ENCODE measurements at regions of chr15 and their contacts with region 1.

Region 1: GRCh38 chr15:101127506-101128076 is 124.3 kb downstream of the CHSY1 start:
- DNase-seq: peak; percentile 77
- ATAC-seq: peak; percentile 73
- H3K4me3 Mint-ChIP-seq: peak overlapping the region; percentile 69
- H3K27ac Mint-ChIP-seq: peak overlapping the region; percentile 98
- H3K4me1 Mint-ChIP-seq: peaks cover 72% of the 10 kb centered on the region
- H3K27me3 Mint-ChIP-seq: no peaks in the 10 kb centered on the region

Region 2: DNA sequence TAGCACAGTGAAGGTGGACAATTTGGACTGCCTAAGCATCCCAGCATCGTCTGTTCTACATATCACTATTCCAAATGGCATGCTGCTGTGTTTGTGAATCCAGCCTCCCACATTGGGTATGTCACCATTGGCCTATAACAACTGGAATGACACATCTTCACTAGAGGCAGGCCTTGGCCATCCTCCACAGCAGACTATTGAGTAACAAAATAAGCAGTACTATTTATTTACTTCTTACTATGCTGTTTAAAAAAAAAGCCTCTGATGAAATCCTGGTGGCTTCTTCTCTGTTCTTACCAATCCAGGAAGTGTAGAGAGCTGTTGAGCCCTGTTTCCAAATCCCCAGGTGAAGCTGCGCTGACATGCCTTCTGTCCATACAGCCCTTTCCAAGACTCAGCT is 568.3 kb before region 1 on chr15:
- CTCF ChIA-PET with region 1: no interaction called
- DNase-seq: no peak
- ATAC-seq: no peak
- H3K4me3 Mint-ChIP-seq: no peak overlapping the region
- H3K27ac Mint-ChIP-seq: no peak overlapping the region
- H3K4me1 Mint-ChIP-seq: no peaks in the 10 kb centered on the region
- H3K27me3 Mint-ChIP-seq: no peaks in the 10 kb centered on the region

Region 3: GRCh38 chr15:101251830-101252820 is 124.5 kb after region 1 on chr15 and contains the start of gene CHSY1:
- CTCF ChIA-PET with region 1: interaction called, 21 read pairs
- DNase-seq: peak; percentile 92
- ATAC-seq: peak; percentile 82
- H3K4me3 Mint-ChIP-seq: peak within 1 kb of the TSS; percentile 85
- H3K27ac Mint-ChIP-seq: peak within 1 kb of the TSS; percentile 89
- H3K4me1 Mint-ChIP-seq: peaks cover 69% of the 10 kb centered on the region
- H3K27me3 Mint-ChIP-seq: no peaks in the 10 kb centered on the region
- total RNA-seq, gene CHSY1: 50.5 to 59.4 TPM